AG04449 (cell line): ENCODE measurements at regions of chr14 and their contacts with region 1.

Region 1: GRCh38 chr14:99982537-99983250 is 82.5 kb upstream of the EVL start:
- DNase-seq: no peak
- H3K4me3 ChIP-seq: no peak overlapping the region
- CTCF ChIP-seq: peak; percentile 82

Region 2: GRCh38 chr14:99879401-99880295 is 103.0 kb before region 1 on chr14:
- CTCF ChIA-PET with region 1: no interaction called
- POLR2A ChIA-PET with region 1: no interaction called
- DNase-seq: peak; percentile 61
- H3K4me3 ChIP-seq: no peak overlapping the region
- CTCF ChIP-seq: no peak

Region 3: DNA sequence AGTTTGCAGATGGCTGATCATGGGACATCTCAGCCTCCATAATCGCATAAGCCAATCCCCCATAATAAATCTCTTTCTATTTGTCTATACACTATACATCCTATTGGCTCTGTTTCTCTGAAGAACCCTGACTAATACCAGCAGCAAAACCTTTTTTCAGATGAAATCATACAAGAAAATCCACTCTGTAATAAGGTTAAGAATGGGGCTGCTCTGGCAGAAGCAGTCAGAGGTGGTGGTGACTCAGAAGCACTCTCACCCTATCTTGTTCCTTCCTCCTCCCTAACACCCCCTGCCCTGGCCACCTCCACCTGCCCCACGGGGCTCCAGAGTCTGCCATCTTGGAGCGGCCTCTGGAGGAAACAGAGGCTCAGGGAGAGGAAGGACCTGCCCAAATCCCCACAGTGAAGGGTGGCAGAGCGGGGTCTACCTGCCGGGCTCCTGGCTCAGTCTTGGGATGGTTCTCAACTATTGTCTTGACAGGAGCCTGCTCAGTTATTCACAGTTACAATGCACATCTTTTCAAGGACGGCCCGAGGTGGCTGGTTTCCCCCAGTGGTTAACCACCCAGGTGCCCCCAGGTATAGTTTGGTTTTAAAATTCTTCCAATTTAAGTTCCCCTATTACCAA is 26.8 kb before region 1 on chr14:
- CTCF ChIA-PET with region 1: no interaction called
- POLR2A ChIA-PET with region 1: no interaction called
- DNase-seq: no peak
- H3K4me3 ChIP-seq: no peak overlapping the region
- CTCF ChIP-seq: no peak

Region 4: DNA sequence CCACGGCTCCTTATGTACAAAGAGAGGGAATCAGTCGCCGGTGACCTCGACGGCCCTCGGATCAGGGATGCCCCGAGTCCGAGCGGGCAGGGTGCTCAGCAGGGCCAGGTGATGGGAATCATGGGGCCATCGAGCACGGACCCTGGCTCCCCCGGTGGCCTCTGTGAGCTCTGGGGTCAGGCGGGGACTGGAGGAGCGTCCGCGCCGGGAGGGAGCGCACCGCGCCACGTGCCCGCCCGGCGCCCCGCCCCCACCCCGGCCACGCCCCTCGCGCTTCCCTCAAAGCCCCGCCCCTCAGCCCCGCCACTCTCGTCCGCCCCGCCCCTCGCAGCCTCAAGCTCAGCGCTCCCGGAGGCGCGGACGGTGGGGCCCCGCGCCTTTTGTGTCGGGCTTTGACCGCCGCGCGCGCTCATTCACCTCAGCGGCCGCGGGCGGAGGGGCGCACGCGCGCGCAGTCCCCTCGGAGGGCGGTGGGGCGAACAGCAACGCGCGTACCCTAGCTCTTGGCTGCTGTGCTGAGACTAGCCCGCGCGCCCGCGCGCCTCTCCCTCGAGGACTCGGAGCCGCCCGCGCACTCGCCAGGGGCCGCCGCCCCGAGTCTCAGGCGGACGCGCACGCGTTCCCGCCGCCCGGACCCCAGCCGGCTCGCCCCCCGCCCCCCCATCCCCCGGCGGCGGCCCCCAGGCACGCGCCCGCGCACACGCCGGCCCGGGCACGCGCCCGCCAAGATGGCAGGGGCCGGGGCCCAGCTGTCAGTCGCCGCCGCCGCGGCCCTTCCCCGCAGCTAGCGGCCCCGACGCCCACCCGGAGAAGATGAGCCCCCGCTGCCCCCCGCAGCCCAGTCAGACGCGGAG is 11.4 kb before region 1 on chr14:
- CTCF ChIA-PET with region 1: interaction called, 27 read pairs
- POLR2A ChIA-PET with region 1: no interaction called
- DNase-seq: no peak
- H3K4me3 ChIP-seq: peak overlapping the region; percentile 79
- CTCF ChIP-seq: no peak

Region 5: GRCh38 chr14:100025111-100025510 is 42.4 kb after region 1 on chr14:
- CTCF ChIA-PET with region 1: interaction called, 47 read pairs
- POLR2A ChIA-PET with region 1: interaction called, 6 read pairs
- DNase-seq: no peak
- H3K4me3 ChIP-seq: no peak overlapping the region
- CTCF ChIP-seq: peak; percentile 55

Region 6: GRCh38 chr14:100049220-100049619 is 66.5 kb after region 1 on chr14:
- CTCF ChIA-PET with region 1: interaction called, 20 read pairs
- POLR2A ChIA-PET with region 1: no interaction called
- DNase-seq: no peak
- H3K4me3 ChIP-seq: no peak overlapping the region
- CTCF ChIP-seq: no peak

Region 7: GRCh38 chr14:100192672-100193416 is 210.2 kb after region 1 on chr14:
- CTCF ChIA-PET with region 1: interaction called, 72 read pairs
- POLR2A ChIA-PET with region 1: interaction called, 3 read pairs
- DNase-seq: peak; percentile 68
- H3K4me3 ChIP-seq: peak overlapping the region; percentile 61
- CTCF ChIP-seq: peak; percentile 97